AG04449 (cell line): ENCODE measurements at regions of chr5 and their contacts with region 1.

Region 1: DNA sequence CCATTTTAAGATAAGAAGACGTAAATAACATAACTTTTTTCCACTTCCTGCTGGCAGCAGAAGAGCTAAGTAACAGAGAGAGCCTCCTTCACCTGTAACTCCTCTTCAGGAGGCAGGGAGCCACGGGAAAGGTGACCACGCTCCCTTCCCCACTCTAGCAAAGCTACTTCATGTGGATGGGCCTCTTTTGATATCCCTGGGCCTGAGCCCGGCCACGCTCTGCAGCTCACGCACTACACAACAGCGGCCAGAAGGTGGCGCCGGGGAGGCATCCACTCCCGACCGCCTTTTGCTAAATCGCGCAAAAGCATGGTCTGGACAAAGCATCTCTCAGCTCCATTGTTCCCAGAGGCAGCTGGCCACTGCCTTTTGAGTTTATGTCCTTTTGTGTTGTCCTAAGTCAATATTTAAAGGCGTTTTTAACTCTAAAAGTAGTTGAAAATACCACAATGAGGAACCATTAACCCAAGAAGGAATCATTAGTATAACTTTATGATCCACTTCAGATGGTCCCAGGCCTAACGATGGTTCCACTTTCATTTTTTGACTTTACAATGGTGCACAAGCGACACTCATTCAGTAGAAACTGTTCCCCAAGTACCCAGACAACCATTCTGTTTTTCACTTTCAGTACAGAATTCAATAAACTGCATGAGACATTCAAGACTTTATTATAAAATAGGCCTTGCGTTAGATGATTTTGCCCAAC is 23.6 kb downstream of the CMBL start:
- DNase-seq: no peak
- H3K4me3 ChIP-seq: no peak overlapping the region
- CTCF ChIP-seq: peak; percentile 96

Region 2: GRCh38 chr5:10018203-10019060 is 265.6 kb before region 1 on chr5:
- CTCF ChIA-PET with region 1: no interaction called
- POLR2A ChIA-PET with region 1: no interaction called
- DNase-seq: peak; percentile 80
- H3K4me3 ChIP-seq: no peak overlapping the region
- CTCF ChIP-seq: no peak

Region 3: DNA sequence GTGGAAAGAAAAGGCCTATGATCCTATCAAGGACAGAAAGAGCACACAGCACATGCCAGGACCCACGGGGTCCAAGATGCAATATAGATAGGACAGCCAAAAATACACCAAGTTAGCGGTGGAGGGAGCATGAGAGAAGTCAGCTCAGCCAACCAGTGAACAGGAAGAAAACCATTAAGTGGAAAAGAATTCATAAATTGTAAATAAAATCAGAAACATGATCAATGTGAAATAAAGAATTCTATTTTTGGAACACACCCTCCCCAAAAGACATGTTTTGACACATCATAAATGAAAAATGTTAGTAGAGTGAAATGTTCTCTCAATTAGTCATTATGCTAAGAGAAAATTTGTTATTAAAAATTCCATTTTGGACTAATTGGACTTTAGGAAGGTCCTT is 70.0 kb before region 1 on chr5:
- CTCF ChIA-PET with region 1: no interaction called
- POLR2A ChIA-PET with region 1: no interaction called
- DNase-seq: no peak
- H3K4me3 ChIP-seq: no peak overlapping the region
- CTCF ChIP-seq: no peak

Region 4: DNA sequence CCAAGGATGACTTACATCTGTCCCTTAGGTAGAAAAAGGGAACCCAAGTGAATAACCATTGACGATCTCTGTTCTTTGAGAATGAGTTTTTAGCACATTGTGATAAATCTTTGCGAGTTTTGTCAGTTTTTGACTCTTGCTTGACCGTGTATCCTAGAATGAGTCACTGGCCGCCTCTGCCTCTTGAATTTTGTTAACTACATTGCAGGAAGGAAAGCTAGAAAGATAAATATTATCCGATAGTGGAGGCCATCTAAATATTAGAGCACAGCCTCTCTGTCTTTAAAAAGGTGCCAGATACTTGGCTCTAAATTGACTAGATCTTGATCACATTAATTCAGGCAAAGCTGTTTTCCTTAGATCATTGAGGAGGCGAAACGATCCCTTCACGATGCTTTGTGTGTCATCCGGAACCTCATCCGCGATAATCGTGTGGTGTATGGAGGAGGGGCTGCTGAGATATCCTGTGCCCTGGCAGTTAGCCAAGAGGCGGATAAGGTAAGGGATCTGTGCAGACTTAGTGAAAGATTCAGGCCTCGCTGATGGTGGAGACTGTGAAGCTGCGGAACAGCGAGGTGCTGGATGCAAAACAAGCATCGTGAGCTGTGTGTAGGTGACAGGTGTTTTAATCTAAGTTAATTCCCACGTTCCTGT is 21.8 kb before region 1 on chr5:
- CTCF ChIA-PET with region 1: interaction called, 21 read pairs
- POLR2A ChIA-PET with region 1: no interaction called
- DNase-seq: no peak
- H3K4me3 ChIP-seq: no peak overlapping the region
- CTCF ChIP-seq: no peak

Region 5: GRCh38 chr5:10295619-10296326 is 11.7 kb after region 1 on chr5:
- CTCF ChIA-PET with region 1: interaction called, 23 read pairs
- POLR2A ChIA-PET with region 1: no interaction called
- DNase-seq: no peak
- H3K4me3 ChIP-seq: no peak overlapping the region
- CTCF ChIP-seq: no peak

Region 6: DNA sequence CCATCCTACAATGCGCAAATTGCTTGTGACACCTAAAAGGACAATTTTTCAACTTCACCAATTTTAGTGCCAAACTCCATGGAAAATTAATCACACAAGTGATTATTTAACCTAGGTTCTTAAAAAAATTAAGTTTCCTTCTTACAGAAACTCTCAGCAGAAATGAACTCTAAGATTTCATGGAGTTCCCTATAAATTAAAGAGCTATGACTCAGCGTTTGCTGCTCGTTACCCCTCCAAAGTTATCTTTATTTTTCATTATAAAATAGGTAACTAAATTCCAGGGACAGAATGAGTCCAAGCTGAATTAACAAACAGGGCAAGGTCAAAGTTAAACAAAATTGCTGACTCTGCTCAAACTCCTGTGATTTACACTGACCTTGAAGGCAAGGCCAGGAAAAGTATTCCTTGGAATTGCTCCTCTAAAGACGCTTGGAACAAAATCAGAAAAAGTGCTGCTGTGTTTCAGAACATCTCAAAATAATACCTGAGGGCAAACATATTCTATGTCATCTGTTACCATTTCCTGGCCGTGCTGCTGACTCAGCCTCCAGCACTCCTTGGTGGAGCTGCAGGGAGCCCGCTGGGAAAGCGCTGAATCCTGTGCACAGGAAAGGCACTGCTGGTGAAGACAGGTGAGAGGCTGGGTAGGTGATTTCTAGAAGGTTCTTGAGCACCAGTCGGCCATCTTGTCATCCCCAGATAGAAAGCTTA is 26.1 kb after region 1 on chr5:
- CTCF ChIA-PET with region 1: interaction called, 22 read pairs
- POLR2A ChIA-PET with region 1: no interaction called
- DNase-seq: no peak
- H3K4me3 ChIP-seq: no peak overlapping the region
- CTCF ChIP-seq: no peak

Region 7: DNA sequence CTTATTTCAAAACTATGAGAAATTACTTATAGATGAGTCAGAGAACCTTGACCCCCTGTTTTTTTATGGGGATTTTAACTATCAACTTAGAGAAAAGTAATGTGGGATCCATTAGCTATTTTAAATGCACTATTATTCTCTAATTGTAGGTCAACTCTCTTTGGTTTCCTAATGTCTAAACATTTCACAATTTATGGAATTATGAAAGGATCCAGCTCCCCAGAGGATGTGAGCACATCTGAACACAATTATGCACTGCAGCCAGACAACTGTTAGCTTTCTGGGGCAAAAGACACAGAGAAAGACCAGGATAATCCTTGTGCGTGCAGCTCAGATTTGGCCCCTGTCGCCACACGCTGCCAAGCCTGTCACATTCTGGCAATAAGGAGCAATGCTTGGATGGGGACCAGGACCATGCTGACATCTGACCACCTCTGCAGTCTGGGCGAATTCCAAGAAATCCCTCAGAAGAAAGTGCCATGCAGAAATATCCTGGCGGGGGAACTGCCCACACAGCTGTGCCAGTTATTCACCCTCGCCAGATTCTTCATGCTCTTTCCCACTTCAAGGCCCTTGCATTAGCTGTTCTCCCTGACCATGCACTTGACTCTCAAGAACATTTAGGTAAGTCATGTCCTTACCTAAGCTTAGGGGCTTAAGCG is 45.9 kb after region 1 on chr5:
- CTCF ChIA-PET with region 1: interaction called, 12 read pairs
- POLR2A ChIA-PET with region 1: no interaction called
- DNase-seq: peak; percentile 53
- H3K4me3 ChIP-seq: peak overlapping the region; percentile 18; the same call in 1 of the 2 replicates
- CTCF ChIP-seq: no peak

Region 8: DNA sequence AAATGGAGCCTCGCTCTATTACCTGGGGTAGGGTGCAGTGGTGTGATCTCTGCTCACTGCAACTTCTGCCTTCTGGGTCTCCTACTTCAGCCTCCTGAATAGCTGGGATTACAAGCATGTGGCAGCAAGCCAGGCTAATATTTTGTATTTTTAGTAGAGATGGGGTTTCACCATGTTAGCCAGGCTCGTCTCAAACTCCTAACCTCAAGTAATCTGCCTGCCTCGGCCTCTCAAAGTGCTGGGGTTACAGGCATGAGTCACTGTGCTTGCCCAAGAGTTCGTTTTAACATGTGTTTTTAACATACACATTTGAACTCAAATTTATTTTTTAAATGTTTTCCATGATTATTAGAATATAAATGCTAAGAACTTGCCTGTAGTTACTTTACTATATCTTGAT is 103.6 kb after region 1 on chr5:
- CTCF ChIA-PET with region 1: interaction called, 17 read pairs
- POLR2A ChIA-PET with region 1: no interaction called
- DNase-seq: no peak
- H3K4me3 ChIP-seq: no peak overlapping the region
- CTCF ChIP-seq: no peak

Region 9: GRCh38 chr5:10424124-10424731 is 140.1 kb after region 1 on chr5:
- CTCF ChIA-PET with region 1: interaction called, 163 read pairs
- POLR2A ChIA-PET with region 1: no interaction called
- DNase-seq: no peak
- H3K4me3 ChIP-seq: no peak overlapping the region
- CTCF ChIP-seq: peak; percentile 54

Region 10: GRCh38 chr5:10601246-10602030 is 317.4 kb after region 1 on chr5:
- CTCF ChIA-PET with region 1: no interaction called
- POLR2A ChIA-PET with region 1: no interaction called
- DNase-seq: no peak
- H3K4me3 ChIP-seq: no peak overlapping the region; the same call in 1 of the 2 replicates
- CTCF ChIP-seq: no peak